ENCODE measurements at regions of chr14 and their contacts with region 1.

Region 1: DNA sequence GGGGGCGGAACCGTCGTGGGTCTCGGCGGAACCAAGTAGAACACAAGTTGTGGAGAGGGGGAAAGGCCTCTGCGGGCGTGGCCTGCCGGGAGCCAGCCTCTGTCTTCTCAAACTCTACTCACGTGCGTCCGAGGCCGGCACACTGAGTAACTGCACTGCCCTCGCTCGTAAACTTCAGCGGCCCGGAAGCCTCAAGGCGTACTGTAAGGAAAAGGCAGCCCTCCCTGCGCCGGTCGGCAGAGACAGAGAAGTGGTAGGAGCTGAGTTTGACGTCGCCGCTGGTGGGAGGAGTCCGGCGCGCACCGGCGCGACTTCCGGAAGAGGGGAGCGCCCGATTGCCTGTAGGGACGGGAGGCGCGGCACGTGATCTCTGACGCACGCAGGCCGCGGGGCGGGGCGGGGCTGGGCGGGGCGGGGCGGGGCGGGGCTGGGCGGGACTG is at the start of gene FBXO33:
- DNase-seq: peak; percentile 93 to 99 (median 98)
- ATAC-seq: peak; percentile 89
- H3K4me3 ChIP-seq: peak within 1 kb of the TSS; percentile 98
- H3K4me3 Mint-ChIP-seq: peak within 1 kb of the TSS; percentile 99 to 100 (median 100)
- H3K27ac ChIP-seq: peak within 1 kb of the TSS; percentile 99
- H3K27ac Mint-ChIP-seq: peak within 1 kb of the TSS; percentile 100
- H3K4me1 ChIP-seq: peaks cover 26 to 34% of the 10 kb centered on the region in 2 donors
- H3K4me1 Mint-ChIP-seq: peaks cover 33 to 50% (median 43%) of the 10 kb centered on the region in 7 donors
- H3K27me3 ChIP-seq: no peaks in the 10 kb centered on the region
- H3K27me3 Mint-ChIP-seq: peaks cover 0 to 2% (median 0%) of the 10 kb centered on the region in 5 donors
- total RNA-seq, gene FBXO33: 16.5 to 68.2 (median 27.9) TPM

Region 2: DNA sequence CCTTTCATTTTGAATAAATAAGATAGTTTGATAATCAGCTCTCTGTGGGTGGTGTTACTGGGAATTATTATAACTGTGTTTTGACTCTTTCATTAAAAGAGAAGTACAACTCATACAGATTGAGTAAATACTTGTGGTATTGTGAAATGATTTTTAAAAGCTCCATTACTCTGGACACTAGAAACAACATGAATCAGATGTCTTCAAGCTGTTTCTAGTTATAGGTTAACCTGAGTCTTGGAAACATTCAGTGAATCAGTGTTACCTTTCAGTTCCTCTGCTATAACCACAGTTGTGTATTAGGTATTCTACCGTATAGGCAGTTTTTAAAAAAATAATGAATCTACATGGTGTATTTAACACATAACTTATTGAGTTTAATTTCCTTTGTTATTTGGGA is 1352.9 kb before region 1 on chr14:
- CTCF ChIA-PET with region 1: no interaction called
- POLR2A ChIA-PET with region 1: interaction called, 4 read pairs
- intact Hi-C with region 1: loop called in 1 of 2 experiments (anchors 10 kb)
- DNase-seq: no peak
- ATAC-seq: no peak
- H3K4me3 ChIP-seq: peak overlapping the region; percentile 31
- H3K4me3 Mint-ChIP-seq: peak overlapping the region in 8 of 10 donors; percentile 58 to 86 (median 74)
- H3K27ac ChIP-seq: peak overlapping the region; percentile 54
- H3K27ac Mint-ChIP-seq: peak overlapping the region in 8 of 9 donors; percentile 88 to 98 (median 92)
- H3K4me1 ChIP-seq: peaks cover 40 to 64% of the 10 kb centered on the region in 2 donors
- H3K4me1 Mint-ChIP-seq: peaks cover 19 to 82% (median 70%) of the 10 kb centered on the region in 7 donors
- H3K27me3 ChIP-seq: no peaks in the 10 kb centered on the region
- H3K27me3 Mint-ChIP-seq: no peaks in the 10 kb centered on the region

Region 3: DNA sequence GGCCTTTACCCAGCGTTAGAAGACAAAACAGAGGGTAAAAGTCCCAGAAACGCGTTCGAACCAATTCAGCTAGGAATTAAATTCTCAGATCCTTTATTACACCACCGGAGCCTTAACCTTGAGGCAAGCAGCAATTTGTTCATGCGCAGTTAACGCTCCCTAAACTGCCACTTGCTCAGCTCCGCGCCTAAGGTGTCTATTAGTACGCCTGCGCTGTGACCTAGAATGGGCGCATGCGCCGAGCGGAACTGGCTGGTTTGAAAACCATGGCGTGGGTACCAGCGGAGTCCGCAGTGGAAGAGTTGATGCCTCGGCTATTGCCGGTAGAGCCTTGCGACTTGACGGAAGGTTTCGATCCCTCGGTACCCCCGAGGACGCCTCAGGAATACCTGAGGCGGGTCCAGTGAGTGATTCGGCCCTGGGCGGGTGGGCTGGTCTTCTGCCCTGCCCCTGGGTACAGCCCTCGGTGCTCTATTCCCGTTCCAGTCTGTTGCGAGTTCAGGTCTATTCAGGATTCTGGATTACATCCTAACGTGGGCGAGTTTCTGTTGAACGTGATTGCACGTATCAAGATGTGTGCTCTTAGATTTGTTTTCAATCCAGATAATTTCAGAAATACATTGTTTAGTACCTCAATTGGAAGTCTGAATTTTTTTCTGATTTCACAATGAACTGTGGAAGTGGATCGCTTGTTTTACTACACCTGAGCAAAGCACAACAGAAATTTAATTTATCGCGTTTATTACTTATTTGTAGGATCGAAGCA is 317.9 kb before region 1 on chr14 and contains the start of gene GEMIN2:
- CTCF ChIA-PET with region 1: no interaction called
- POLR2A ChIA-PET with region 1: interaction called, 22 read pairs
- intact Hi-C with region 1: loop called (anchors 1 kb)
- DNase-seq: peak; percentile 88 to 95 (median 92)
- ATAC-seq: peak; percentile 99
- H3K4me3 ChIP-seq: peak within 1 kb of the TSS; percentile 68
- H3K4me3 Mint-ChIP-seq: peak within 1 kb of the TSS; percentile 89 to 99 (median 97)
- H3K27ac ChIP-seq: peak within 1 kb of the TSS; percentile 80
- H3K27ac Mint-ChIP-seq: peak within 1 kb of the TSS; percentile 81 to 98 (median 94)
- H3K4me1 ChIP-seq: peaks cover 12 to 13% of the 10 kb centered on the region in 2 donors
- H3K4me1 Mint-ChIP-seq: peaks cover 10 to 36% (median 24%) of the 10 kb centered on the region in 7 donors
- H3K27me3 ChIP-seq: no peaks in the 10 kb centered on the region
- H3K27me3 Mint-ChIP-seq: peaks cover 0 to 3% (median 0%) of the 10 kb centered on the region in 5 donors
- total RNA-seq, gene GEMIN2: 7.2 to 20.9 (median 18.6) TPM

Region 4: GRCh38 chr14:39174560-39175444 is 257.4 kb before region 1 on chr14 and contains the start of gene PNN:
- CTCF ChIA-PET with region 1: no interaction called
- POLR2A ChIA-PET with region 1: interaction called, 37 read pairs
- intact Hi-C with region 1: loop called (anchors 1 kb)
- DNase-seq: peak; percentile 83 to 99 (median 98)
- ATAC-seq: peak; percentile 94
- H3K4me3 ChIP-seq: peak within 1 kb of the TSS; percentile 80
- H3K4me3 Mint-ChIP-seq: peak within 1 kb of the TSS; percentile 95 to 100 (median 99)
- H3K27ac ChIP-seq: peak within 1 kb of the TSS; percentile 90
- H3K27ac Mint-ChIP-seq: peak within 1 kb of the TSS; percentile 96 to 100 (median 99)
- H3K4me1 ChIP-seq: peaks cover 16 to 28% of the 10 kb centered on the region in 2 donors
- H3K4me1 Mint-ChIP-seq: peaks cover 27 to 74% (median 50%) of the 10 kb centered on the region in 7 donors
- H3K27me3 ChIP-seq: no peaks in the 10 kb centered on the region
- H3K27me3 Mint-ChIP-seq: no peaks in the 10 kb centered on the region
- total RNA-seq, gene PNN: 80.1 to 120 (median 102) TPM

Region 5: GRCh38 chr14:39266871-39267591 is 165.2 kb before region 1 on chr14:
- CTCF ChIA-PET with region 1: no interaction called
- POLR2A ChIA-PET with region 1: interaction called, 40 read pairs
- intact Hi-C with region 1: loop called (anchors 1 kb)
- DNase-seq: peak; percentile 65 to 77 (median 71)
- ATAC-seq: peak; percentile 87
- H3K4me3 ChIP-seq: peak overlapping the region; percentile 86
- H3K4me3 Mint-ChIP-seq: peak overlapping the region; percentile 76 to 100 (median 95)
- H3K27ac ChIP-seq: peak overlapping the region; percentile 94
- H3K27ac Mint-ChIP-seq: peak overlapping the region; percentile 88 to 98 (median 96)
- H3K4me1 ChIP-seq: peaks cover 17 to 29% of the 10 kb centered on the region in 2 donors
- H3K4me1 Mint-ChIP-seq: peaks cover 47 to 62% (median 58%) of the 10 kb centered on the region in 7 donors
- H3K27me3 ChIP-seq: no peaks in the 10 kb centered on the region
- H3K27me3 Mint-ChIP-seq: no peaks in the 10 kb centered on the region

Region 6: GRCh38 chr14:39417014-39417413 is 15.2 kb before region 1 on chr14:
- CTCF ChIA-PET with region 1: no interaction called
- POLR2A ChIA-PET with region 1: interaction called, 14 read pairs
- intact Hi-C with region 1: loop called in 1 of 2 experiments (anchors 2 kb)
- DNase-seq: no peak
- ATAC-seq: no peak
- H3K4me3 ChIP-seq: no peak overlapping the region
- H3K4me3 Mint-ChIP-seq: no peak overlapping the region
- H3K27ac ChIP-seq: no peak overlapping the region
- H3K27ac Mint-ChIP-seq: peak overlapping the region in 2 of 9 donors; percentile 8 to 80
- H3K4me1 ChIP-seq: peaks cover 0 to under 1% of the 10 kb centered on the region in 2 donors
- H3K4me1 Mint-ChIP-seq: peaks cover 8 to 63% (median 48%) of the 10 kb centered on the region in 7 donors
- H3K27me3 ChIP-seq: no peaks in the 10 kb centered on the region
- H3K27me3 Mint-ChIP-seq: no peaks in the 10 kb centered on the region

Measured in naive thymus-derived CD4-positive, alpha-beta T cell (primary cell).